Endothelial cell of umbilical vein (primary cell): ENCODE measurements at regions of chr3 and their contacts with region 1.

Region 1: DNA sequence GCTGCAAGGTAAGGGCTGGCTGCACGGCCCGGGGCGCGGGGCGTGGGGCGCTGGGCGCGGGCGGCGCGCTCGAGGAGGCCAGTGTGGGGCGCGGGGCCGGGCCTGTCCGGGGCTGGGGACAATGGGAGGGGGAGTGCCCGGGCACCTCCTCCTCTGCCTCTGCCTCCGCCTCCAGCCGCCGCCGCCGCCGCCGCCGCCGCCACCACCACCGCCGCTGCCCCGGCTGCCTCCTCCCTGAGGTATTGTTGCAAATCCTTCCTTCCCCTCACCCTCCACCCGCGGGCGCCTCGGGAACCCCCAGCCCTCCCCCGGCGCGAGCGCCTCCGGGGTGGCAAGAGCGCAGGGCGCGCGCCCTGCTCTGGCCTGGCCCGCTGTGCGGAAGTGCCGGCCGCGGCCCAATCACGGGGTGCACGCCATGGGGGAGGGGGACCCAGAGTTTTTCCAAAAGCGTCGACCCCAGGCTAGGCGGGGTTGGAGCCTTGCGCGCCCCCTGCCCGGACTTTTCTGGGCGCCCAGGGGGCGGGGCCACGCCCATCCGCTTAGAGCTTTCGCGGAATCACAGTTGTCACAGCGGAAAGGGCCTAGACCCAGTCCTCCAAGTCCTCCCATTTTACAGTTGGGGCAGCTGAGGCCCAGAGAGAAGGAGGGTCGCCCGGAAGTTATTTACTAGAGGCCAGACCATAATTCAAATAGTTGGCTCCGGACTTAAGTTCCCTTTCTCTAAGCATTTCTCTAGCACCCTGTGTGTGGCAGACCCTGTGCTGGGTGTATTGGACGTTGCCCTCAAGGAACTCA is at the start of gene LPP:
- DNase-seq: peak; percentile 45
- H3K4me3 ChIP-seq: peak within 1 kb of the TSS; percentile 91 to 94 (median 92)
- H3K27ac ChIP-seq: peak within 1 kb of the TSS; percentile 91
- H3K4me1 ChIP-seq: peaks cover 20% of the 10 kb centered on the region
- H3K27me3 ChIP-seq: no peaks in the 10 kb centered on the region
- CTCF ChIP-seq: no peak
- POLR2A ChIP-seq: peak; percentile 15
- total RNA-seq, gene LPP: 136 and 153 TPM in 2 replicates

Region 2: GRCh38 chr3:188123170-188123905 is 30.9 kb before region 1 on chr3:
- CTCF ChIA-PET with region 1: no interaction called
- POLR2A ChIA-PET with region 1: no interaction called
- dilution Hi-C with region 1: no loop called
- intact Hi-C with region 1: no loop called
- DNase-seq: no peak
- H3K4me3 ChIP-seq: no peak overlapping the region
- H3K27ac ChIP-seq: no peak overlapping the region
- H3K4me1 ChIP-seq: no peaks in the 10 kb centered on the region
- H3K27me3 ChIP-seq: peaks cover 2 to 4% of the 10 kb centered on the region in 2 experiments
- CTCF ChIP-seq: no peak
- POLR2A ChIP-seq: no peak

Region 3: DNA sequence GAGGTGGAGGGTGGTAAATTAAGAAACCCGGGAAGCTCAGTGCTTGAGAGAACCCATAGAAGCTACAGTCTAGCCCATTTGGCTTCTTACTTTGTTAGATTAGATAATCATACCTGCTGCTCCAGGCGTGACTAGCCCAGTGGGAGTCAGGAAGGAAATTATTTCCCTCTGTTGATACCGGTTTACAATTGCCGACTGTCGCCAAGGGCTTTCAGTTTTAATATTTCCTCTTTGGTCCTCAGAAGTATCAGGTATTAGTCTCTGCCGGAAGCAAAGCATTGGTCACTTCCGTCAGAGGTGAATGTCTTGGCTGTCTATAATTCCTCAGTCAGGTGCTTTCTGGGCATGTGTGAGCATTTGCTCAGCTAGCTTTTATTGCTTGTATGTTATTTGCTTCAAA is 75.0 kb after region 1 on chr3:
- CTCF ChIA-PET with region 1: no interaction called
- POLR2A ChIA-PET with region 1: no interaction called
- dilution Hi-C with region 1: no loop called
- intact Hi-C with region 1: loop called (anchors 1 kb)
- DNase-seq: peak; percentile 77
- H3K4me3 ChIP-seq: no peak overlapping the region
- H3K27ac ChIP-seq: peak overlapping the region; percentile 39
- H3K4me1 ChIP-seq: peaks cover 17% of the 10 kb centered on the region
- H3K27me3 ChIP-seq: no peaks in the 10 kb centered on the region
- CTCF ChIP-seq: no peak
- POLR2A ChIP-seq: no peak

Region 4: DNA sequence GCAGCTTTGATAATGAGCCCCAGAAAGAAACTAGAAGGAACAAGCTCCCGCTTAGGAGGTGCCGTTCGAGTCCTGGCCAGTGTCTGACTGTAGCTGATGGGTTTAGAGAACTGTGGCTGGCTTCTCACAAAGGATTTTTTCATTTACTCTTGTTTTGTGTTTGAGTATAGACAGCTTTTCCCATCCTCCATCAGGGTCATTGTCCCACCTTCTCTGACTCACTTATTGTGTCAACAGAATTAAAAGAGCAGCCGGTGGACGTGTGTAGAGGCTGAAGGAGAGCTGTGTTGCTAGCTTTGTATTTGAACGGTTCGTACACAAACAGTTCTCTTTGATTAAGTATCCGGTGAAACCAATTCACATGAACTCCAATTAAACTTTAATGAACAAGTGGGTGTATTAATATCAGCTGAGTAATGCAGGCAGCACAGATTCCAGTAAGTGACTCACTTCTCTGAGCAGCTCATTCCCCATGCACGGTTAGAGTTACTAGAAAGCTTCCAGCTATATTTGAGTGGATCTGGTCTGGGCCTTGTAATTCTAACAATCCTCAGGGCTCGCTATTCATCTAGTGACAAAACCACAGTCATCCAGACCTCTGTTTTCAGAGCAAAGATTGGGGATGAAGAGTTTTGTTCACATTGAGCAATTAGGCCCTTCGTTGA is 140.7 kb after region 1 on chr3:
- CTCF ChIA-PET with region 1: no interaction called
- POLR2A ChIA-PET with region 1: interaction called, 8 read pairs
- dilution Hi-C with region 1: no loop called
- intact Hi-C with region 1: loop called (anchors 10 kb)
- DNase-seq: peak; percentile 95
- H3K4me3 ChIP-seq: no peak overlapping the region
- H3K27ac ChIP-seq: peak overlapping the region; percentile 63
- H3K4me1 ChIP-seq: peaks cover 49% of the 10 kb centered on the region
- H3K27me3 ChIP-seq: no peaks in the 10 kb centered on the region
- CTCF ChIP-seq: no peak
- POLR2A ChIP-seq: no peak

Region 5: GRCh38 chr3:188362405-188362831 is 208.2 kb after region 1 on chr3:
- CTCF ChIA-PET with region 1: no interaction called
- POLR2A ChIA-PET with region 1: no interaction called
- dilution Hi-C with region 1: no loop called
- intact Hi-C with region 1: loop called (anchors 1 kb)
- DNase-seq: peak; percentile 84
- H3K4me3 ChIP-seq: no peak overlapping the region
- H3K27ac ChIP-seq: peak overlapping the region; percentile 66
- H3K4me1 ChIP-seq: peaks cover 36% of the 10 kb centered on the region
- H3K27me3 ChIP-seq: no peaks in the 10 kb centered on the region
- CTCF ChIP-seq: no peak
- POLR2A ChIP-seq: no peak

Region 6: DNA sequence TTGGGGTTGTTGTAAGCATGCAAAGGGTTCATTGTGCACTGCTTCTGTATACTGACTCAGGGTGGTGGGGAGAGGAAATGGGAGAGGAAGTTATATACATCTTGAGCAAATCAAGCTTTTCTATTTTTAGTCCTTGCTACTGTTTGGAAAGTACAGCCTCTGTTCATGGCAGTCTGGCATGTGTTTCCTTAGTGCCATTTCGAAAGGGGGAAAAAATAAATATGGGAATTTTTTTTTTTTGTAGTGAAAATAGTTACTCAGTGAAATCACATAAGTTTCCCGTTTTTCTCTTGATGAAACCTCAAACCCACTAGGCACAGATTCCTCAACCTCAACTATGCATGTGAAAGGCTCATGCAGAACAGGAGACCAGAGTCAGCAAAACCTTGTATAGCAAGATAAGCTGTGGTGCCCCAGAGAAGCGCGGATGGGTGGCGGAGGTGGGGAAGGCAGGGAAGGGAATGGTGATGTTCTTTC is 353.1 kb after region 1 on chr3:
- CTCF ChIA-PET with region 1: no interaction called
- POLR2A ChIA-PET with region 1: no interaction called
- dilution Hi-C with region 1: no loop called
- intact Hi-C with region 1: loop called (anchors 5 kb)
- DNase-seq: peak; percentile 83
- H3K4me3 ChIP-seq: no peak overlapping the region
- H3K27ac ChIP-seq: peak overlapping the region; percentile 33
- H3K4me1 ChIP-seq: peaks cover 25% of the 10 kb centered on the region
- H3K27me3 ChIP-seq: no peaks in the 10 kb centered on the region
- CTCF ChIP-seq: no peak
- POLR2A ChIP-seq: no peak

Region 7: GRCh38 chr3:188646592-188646991 is 492.4 kb after region 1 on chr3:
- CTCF ChIA-PET with region 1: no interaction called
- POLR2A ChIA-PET with region 1: no interaction called
- dilution Hi-C with region 1: no loop called
- intact Hi-C with region 1: loop called (anchors 5 kb)
- DNase-seq: peak; percentile 37
- H3K4me3 ChIP-seq: no peak overlapping the region
- H3K27ac ChIP-seq: no peak overlapping the region
- H3K4me1 ChIP-seq: peaks cover 3% of the 10 kb centered on the region
- H3K27me3 ChIP-seq: no peaks in the 10 kb centered on the region
- CTCF ChIP-seq: no peak
- POLR2A ChIP-seq: no peak

Region 8: GRCh38 chr3:188947401-188948280 is 793.4 kb after region 1 on chr3:
- CTCF ChIA-PET with region 1: no interaction called
- POLR2A ChIA-PET with region 1: no interaction called
- dilution Hi-C with region 1: no loop called
- intact Hi-C with region 1: loop called (anchors 2 kb)
- DNase-seq: peak; percentile 84
- H3K4me3 ChIP-seq: peak overlapping the region in 2 of 3 experiments; percentile 27 to 32
- H3K27ac ChIP-seq: peak overlapping the region; percentile 97
- H3K4me1 ChIP-seq: peaks cover 45% of the 10 kb centered on the region
- H3K27me3 ChIP-seq: no peaks in the 10 kb centered on the region
- CTCF ChIP-seq: peak; percentile 19 to 29
- POLR2A ChIP-seq: no peak